HEK293 (cell line): ENCODE measurements at regions of chr18 and their contacts with region 1.

Region 1: GRCh38 chr18:22563098-22563707 is 145.5 kb upstream of the CTAGE1 start:
- H3K4me3 ChIP-seq: no peak overlapping the region
- H3K27ac ChIP-seq: no peak overlapping the region
- H3K4me1 ChIP-seq: peaks cover 10% of the 10 kb centered on the region; the same call in 1 of the 2 replicates
- CTCF ChIP-seq: peak; percentile 82

Region 2: DNA sequence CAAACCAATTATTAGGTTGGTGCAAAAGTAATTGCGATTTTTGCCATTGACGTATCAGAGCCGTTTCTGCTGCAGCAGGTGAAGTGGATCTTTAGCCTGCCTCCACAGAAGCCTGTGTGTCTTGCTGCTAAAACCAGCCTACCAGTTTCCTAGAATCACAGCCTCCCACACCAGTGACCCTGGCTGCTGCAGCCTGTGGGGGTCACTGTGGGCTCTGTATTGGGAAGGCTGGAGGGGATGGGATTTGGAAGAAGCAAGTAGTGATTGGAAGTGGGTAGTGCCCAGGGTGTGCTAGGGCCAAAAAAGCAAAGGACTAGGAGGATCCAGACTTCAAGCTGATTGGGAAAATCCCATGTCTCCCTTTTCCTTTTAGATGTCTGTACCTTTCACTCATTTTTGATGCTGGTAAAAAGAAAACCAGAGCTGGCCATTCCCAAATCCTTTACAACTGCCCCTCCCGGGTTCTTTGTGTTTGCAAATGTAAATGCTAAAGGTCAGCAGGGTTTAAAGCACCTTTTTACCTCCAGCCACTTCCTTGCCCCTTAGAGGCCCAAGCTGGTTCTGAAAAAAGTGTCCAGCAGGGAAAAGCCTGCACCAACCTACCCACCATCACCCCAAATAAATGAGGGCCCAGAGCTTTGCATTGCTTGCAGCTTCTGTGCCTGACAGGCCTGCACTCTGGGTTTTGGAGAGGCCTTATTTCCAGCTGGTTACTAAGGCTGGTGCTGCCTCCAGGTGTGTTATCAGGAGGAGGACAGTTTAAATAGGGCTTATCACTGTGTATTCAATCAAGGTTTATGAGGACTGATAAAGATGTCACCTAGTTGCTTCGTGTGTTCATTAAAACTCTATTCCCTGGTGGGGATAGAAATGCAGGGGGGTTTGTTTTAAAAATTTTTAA is 650.6 kb before region 1 on chr18:
- CTCF ChIA-PET with region 1: interaction called, 11 read pairs
- POLR2A ChIA-PET with region 1: no interaction called
- H3K4me3 ChIP-seq: no peak overlapping the region
- H3K27ac ChIP-seq: no peak overlapping the region
- H3K4me1 ChIP-seq: peaks cover 7% of the 10 kb centered on the region; the same call in 1 of the 2 replicates
- CTCF ChIP-seq: peak; percentile 52

Region 3: GRCh38 chr18:22169007-22169864 is 394.0 kb before region 1 on chr18 and contains the start of gene GATA6:
- CTCF ChIA-PET with region 1: no interaction called
- POLR2A ChIA-PET with region 1: interaction called, 10 read pairs
- H3K4me3 ChIP-seq: peak within 1 kb of the TSS; percentile 96
- H3K27ac ChIP-seq: peak within 1 kb of the TSS; percentile 100
- H3K4me1 ChIP-seq: peaks cover under 1% of the 10 kb centered on the region
- CTCF ChIP-seq: peak; percentile 90

Region 4: GRCh38 chr18:22223254-22223960 is 339.8 kb before region 1 on chr18:
- CTCF ChIA-PET with region 1: interaction called, 10 read pairs
- POLR2A ChIA-PET with region 1: no interaction called
- H3K4me3 ChIP-seq: no peak overlapping the region
- H3K27ac ChIP-seq: 0 out of 2 replicates have a peak overlapping the region, but pooled peaks have one; percentile 49
- H3K4me1 ChIP-seq: peaks cover 10% of the 10 kb centered on the region
- CTCF ChIP-seq: no peak

Region 5: GRCh38 chr18:22493255-22493654 is 69.9 kb before region 1 on chr18:
- CTCF ChIA-PET with region 1: interaction called, 13 read pairs
- POLR2A ChIA-PET with region 1: interaction called, 3 read pairs
- H3K4me3 ChIP-seq: no peak overlapping the region
- H3K27ac ChIP-seq: peak overlapping the region; percentile 65
- H3K4me1 ChIP-seq: peaks cover 12% of the 10 kb centered on the region
- CTCF ChIP-seq: no peak

Region 6: GRCh38 chr18:22551536-22552151 is 11.6 kb before region 1 on chr18:
- CTCF ChIA-PET with region 1: no interaction called
- POLR2A ChIA-PET with region 1: no interaction called
- H3K4me3 ChIP-seq: no peak overlapping the region
- H3K27ac ChIP-seq: no peak overlapping the region
- H3K4me1 ChIP-seq: peaks cover 2% of the 10 kb centered on the region; the same call in 1 of the 2 replicates
- CTCF ChIP-seq: no peak